Activated CD8-positive, alpha-beta T cell treated with anti-CD3 and anti-CD28 coated beads for 36 hours (primary cell): ENCODE measurements at regions of chr17 and their contacts with region 1.

Region 1: GRCh38 chr17:42337442-42337841 is 49.1 kb downstream of the STAT5A start:
- DNase-seq: peak; percentile 92
- ATAC-seq: peak; percentile 62
- H3K4me3 Mint-ChIP-seq: peak overlapping the region; percentile 56
- H3K27ac Mint-ChIP-seq: peak overlapping the region; percentile 89
- H3K4me1 Mint-ChIP-seq: peaks cover 77% of the 10 kb centered on the region
- H3K27me3 Mint-ChIP-seq: no peaks in the 10 kb centered on the region
- CTCF ChIP-seq: no peak

Region 2: DNA sequence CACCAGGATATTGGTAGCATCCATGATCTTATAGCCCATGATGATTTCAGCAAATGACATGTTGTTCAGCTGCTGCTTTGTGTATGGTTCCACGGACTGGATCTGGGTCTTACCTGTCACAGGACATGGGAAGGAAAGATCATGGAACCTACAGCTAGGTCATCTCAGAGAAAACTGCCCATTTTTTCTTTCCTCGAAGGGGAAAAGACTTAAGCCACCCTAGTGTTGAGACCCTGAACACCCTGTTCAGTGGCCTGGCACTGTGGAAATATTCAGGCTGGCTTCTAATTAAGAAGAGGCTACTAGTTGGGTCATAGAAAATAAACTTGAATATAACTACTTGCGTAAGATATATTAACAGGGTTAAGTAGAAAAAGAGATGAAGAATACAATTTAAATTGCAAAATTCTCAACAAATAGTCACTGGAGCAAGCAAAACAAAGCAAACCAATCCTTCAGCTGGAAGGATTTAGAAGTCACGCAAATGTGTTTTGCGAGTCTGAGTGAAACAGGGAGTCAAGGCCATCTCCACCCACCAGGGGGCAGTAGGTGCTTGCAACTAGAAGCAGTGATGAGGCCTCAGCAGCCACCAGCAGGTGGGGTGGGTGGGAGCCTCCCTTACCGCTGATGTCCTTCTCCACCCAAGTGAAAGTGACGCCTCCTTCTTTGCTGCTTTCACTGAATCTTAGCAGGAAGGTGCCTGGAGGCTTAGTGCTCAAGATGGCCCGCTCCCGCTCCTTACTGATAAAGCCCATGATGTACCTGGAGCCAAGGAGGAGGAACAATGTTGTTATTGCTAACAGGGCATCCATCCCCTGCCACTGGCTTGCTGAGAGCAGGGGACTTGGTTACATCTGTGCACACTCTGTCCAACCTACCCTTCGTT is 14.8 kb before region 1 on chr17:
- CTCF ChIA-PET with region 1: interaction called, 19 read pairs
- POLR2A ChIA-PET with region 1: interaction called, 4 read pairs
- intact Hi-C with region 1: no loop called
- DNase-seq: peak; percentile 99
- ATAC-seq: peak; percentile 89
- H3K4me3 Mint-ChIP-seq: no peak overlapping the region
- H3K27ac Mint-ChIP-seq: peak overlapping the region; percentile 85
- H3K4me1 Mint-ChIP-seq: peaks cover 52% of the 10 kb centered on the region
- H3K27me3 Mint-ChIP-seq: no peaks in the 10 kb centered on the region
- CTCF ChIP-seq: peak; percentile 100

Region 3: DNA sequence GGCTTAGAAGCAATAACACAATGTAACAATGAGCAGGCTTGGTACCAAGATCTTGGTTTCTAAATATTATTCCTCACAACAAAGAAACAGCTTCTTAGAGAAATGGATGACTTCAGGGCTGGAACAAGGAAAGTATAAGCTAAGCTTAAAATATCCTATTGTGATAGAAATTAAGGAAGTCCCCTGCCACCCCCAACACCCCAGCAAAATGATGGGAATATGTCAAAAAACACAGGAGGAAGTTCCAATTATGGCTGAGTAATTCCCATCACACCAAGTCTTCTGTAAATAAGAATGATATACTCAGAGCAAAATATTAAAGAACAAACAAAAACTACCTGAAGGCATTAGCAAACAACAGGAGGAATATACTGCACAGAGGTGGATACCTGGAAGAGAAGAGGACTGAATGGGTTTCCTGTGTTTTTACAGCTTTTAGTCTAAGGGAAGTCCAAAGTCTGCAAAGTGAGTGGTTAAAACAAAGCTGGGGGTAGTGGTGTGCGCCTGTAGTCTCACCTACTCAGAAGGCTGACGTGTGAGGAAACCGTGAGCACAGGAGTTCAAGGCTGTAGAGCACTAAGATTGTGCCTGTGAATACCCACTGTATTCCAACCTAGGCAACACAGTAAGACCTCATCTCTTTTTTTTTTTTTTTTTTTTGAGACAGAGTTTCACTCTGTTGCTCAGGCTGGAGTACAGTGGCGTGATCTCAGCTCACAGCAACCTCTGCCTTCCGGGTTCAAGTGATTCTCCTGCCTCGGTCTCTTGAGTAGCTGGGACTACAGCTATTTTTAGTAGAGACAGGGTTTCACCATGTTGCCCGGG is 104.1 kb after region 1 on chr17:
- CTCF ChIA-PET with region 1: no interaction called
- POLR2A ChIA-PET with region 1: no interaction called
- intact Hi-C with region 1: no loop called
- DNase-seq: no peak
- ATAC-seq: no peak
- H3K4me3 Mint-ChIP-seq: no peak overlapping the region
- H3K27ac Mint-ChIP-seq: no peak overlapping the region
- H3K4me1 Mint-ChIP-seq: peaks cover 11% of the 10 kb centered on the region
- H3K27me3 Mint-ChIP-seq: peaks cover 6% of the 10 kb centered on the region
- CTCF ChIP-seq: no peak